Dorsolateral prefrontal cortex (tissue), 120 donors: ENCODE measurements at regions of chr14 and their contacts with region 1.

Region 1: DNA sequence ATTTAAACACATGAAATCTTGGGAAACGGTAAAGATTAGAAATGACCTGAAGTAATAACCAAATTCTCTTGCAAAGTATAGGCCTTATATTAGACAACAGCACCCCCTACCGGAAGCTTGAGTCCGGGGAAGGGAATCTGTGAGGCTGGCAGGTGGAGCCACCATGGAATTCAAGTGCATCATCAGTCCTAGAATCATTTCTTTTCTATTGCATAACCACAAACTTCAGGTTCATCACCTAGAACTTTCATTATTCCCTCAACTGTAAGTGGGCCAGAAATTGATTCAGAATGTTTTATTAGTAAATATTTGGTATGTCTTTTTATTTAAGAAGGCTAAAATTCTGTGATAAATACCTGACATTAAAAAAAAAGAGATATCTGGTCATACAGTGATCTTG is 48.5 kb downstream of the AP5M1 start:
- DNase-seq: peak in 9 of 10 donors; percentile 34 to 75 (median 67)
- H3K4me3 ChIP-seq: no peak overlapping the region
- H3K27ac ChIP-seq: no peak overlapping the region
- H3K27me3 ChIP-seq: peaks cover 0 to 4% (median 0%) of the 10 kb centered on the region in 45 donors
- CTCF ChIP-seq: peak; percentile 57 to 97 (median 88)

Region 2: DNA sequence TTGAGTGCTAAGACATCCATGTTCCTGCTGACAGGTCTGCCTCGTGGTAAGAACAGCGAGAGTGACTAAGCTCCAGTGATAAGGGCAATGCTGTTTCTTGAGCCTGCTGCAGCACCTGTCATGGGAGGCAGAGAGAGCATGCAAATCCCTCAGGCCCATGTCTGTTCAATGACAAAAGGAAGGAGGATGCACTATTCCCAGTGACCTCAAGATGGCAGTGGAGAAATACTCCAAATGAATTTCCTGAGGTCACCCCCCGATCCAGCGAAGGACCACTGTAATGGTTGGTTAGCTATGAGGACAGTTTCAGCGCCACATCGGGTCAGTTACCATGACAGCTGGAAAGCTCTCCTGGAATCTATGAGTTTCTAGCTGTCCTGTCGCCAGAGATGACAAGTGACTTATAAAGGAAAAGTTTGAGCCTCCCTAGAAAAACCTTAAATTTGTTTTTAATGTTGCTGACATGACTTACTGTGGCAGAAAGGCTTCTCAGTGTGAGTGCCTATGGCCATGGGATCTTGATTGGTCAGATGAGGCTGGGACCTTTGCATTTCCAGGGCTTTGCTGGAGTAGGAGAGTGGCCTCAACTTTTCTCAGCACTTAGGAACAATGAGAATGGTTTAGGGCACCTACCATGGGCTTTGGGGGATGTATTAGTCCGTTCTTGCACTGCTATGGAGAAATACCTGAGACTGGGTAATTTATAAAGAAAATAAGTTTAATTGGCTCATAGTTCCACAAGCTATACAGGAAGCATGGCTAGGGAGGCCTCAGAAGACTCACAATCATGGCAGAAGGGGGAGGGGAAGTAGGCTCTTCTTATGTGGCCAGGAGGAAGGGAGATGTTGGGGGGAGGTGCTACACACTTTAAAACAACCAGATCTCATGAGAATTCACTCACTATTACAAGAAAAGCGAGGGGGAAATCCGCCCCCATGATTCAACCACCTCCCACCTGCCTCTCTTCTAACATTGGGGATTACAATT is 825.7 kb before region 1 on chr14:
- intact Hi-C with region 1: loop called (anchors 5 kb)
- DNase-seq: peak in 4 of 10 donors; percentile 11 to 54 (median 38)
- H3K4me3 ChIP-seq: peak overlapping the region in 9 of 59 donors; percentile 2 to 34 (median 19)
- H3K27ac ChIP-seq: no peak overlapping the region
- H3K27me3 ChIP-seq: no peaks in the 10 kb centered on the region
- CTCF ChIP-seq: peak; percentile 33 to 83 (median 75)

Region 3: GRCh38 chr14:56552615-56553014 is 764.7 kb before region 1 on chr14:
- intact Hi-C with region 1: loop called in 1 of 2 experiments (anchors 5 kb)
- DNase-seq: no peak
- H3K4me3 ChIP-seq: no peak overlapping the region
- H3K27ac ChIP-seq: no peak overlapping the region
- H3K27me3 ChIP-seq: peaks cover 0 to 27% (median 0%) of the 10 kb centered on the region in 45 donors
- CTCF ChIP-seq: no peak